ENCODE measurements at regions of chr11 and their contacts with region 1.

Region 1: DNA sequence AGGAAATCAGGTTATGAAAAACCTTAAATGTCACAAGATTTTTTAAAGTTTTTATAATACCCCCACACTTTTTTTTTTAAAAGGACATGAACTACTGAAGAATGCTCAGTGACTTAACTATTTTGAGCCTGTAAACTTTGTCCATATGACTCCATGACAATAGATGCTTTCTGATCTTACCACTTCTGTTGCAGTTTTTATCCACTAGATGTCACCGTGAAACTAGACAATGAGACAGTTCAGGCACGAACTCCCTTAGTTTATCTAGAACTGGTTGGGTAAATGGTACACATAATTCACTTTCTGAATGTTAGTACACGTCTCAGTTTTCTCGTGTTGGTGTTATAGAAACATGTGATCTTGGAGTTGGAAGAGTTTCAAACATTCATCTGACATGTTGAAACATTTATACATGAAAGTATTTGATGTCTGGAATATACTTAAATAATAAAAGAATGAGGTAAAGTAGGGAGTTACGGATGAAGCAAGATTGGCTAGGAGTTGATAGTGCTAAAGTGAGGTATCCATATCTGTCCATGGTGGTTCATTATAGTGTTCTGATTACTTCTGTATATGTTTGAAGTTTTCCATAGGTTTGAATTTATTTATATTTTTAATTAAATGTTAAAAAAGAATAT is 8.1 kb downstream of the CCDC15 start:
- DNase-seq: peak; percentile 41 to 77 (median 54)
- ATAC-seq: peak; percentile 96
- H3K4me3 ChIP-seq: no peak overlapping the region
- H3K27ac ChIP-seq: no peak overlapping the region
- H3K4me1 ChIP-seq: no peaks in the 10 kb centered on the region
- H3K27me3 ChIP-seq: no peaks in the 10 kb centered on the region
- CTCF ChIP-seq: peak; percentile 67 to 89 (median 72)
- EP300 ChIP-seq: no peak
- POLR2A ChIP-seq: no peak
- RAD21 ChIP-seq: peak; percentile 95 to 96

Region 2: DNA sequence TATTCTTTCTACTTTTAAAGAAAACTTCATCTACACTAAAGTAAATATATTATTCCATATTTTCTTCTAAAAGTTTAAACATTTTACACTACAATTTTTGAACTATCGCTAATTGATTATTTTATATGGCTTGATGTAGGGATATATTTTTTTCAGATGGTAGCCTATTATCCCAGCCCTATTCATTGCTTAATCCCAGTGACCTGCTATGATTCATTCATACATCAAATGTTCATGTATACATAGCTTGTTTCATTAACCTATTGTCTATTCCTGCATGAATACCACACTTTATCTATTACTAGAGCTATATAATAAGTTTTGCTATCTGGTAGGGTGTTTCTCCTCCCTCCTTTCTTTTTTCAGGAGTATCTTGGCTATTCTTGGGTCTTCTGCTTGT is 59.5 kb before region 1 on chr11:
- CTCF ChIA-PET with region 1: no interaction called
- POLR2A ChIA-PET with region 1: no interaction called
- in situ Hi-C with region 1: no loop called
- intact Hi-C with region 1: no loop called
- DNase-seq: no peak
- ATAC-seq: no peak
- H3K4me3 ChIP-seq: no peak overlapping the region
- H3K27ac ChIP-seq: no peak overlapping the region
- H3K4me1 ChIP-seq: no peaks in the 10 kb centered on the region
- H3K27me3 ChIP-seq: peaks cover 4 to 12% of the 10 kb centered on the region in 2 experiments; a peak in 3 of 5 replicates
- CTCF ChIP-seq: no peak
- EP300 ChIP-seq: no peak
- POLR2A ChIP-seq: no peak
- RAD21 ChIP-seq: no peak

Region 3: DNA sequence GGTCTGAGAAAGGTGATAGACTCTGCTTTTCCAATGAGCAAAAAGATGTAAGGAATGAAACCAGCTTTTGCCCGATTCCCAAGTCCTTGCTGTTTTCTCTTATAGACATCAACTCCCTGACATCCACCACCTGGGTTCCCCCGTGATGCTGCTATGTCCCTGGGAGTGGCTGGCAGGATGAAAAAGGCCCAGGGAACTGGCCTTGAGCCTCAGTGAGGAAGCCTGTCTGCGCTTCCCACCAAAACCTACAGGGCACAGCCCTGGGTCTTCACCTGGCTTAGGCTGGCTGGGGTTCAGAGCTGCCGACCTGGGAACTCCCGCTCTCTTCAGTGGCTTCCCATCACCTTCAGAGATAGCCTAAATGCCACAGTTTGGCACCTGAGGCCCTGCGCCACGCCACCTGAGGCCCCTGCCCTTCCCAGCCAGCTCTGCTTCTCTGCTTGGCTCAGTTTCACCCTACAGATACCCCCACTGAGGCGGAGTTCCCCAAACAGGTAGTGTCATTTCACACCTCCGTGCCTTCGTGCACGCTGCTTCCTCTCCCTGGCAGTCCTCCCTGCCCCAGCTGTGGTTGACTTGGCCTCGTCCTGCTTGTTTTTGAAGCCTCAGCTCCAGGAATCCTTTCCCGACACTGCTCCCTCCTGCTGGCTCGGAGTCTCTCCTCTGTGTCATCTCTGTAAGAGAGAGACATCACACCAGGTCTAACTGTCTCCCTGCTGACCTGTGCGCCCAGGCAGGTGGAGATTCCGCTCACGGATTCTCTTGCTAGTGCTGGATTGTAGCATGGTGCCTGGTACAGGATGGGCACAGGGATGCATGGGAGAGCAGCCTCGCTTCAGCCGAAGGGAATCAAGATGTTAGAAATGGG is 111.8 kb after region 1 on chr11:
- CTCF ChIA-PET with region 1: interaction called, 3 read pairs
- POLR2A ChIA-PET with region 1: no interaction called
- in situ Hi-C with region 1: no loop called
- intact Hi-C with region 1: loop called (anchors 1 kb)
- DNase-seq: no peak
- ATAC-seq: no peak
- H3K4me3 ChIP-seq: no peak overlapping the region
- H3K27ac ChIP-seq: no peak overlapping the region
- H3K4me1 ChIP-seq: peaks cover 64% of the 10 kb centered on the region in 2 experiments
- H3K27me3 ChIP-seq: no peaks in the 10 kb centered on the region
- CTCF ChIP-seq: no peak
- EP300 ChIP-seq: no peak
- POLR2A ChIP-seq: no peak
- RAD21 ChIP-seq: no peak

Region 4: DNA sequence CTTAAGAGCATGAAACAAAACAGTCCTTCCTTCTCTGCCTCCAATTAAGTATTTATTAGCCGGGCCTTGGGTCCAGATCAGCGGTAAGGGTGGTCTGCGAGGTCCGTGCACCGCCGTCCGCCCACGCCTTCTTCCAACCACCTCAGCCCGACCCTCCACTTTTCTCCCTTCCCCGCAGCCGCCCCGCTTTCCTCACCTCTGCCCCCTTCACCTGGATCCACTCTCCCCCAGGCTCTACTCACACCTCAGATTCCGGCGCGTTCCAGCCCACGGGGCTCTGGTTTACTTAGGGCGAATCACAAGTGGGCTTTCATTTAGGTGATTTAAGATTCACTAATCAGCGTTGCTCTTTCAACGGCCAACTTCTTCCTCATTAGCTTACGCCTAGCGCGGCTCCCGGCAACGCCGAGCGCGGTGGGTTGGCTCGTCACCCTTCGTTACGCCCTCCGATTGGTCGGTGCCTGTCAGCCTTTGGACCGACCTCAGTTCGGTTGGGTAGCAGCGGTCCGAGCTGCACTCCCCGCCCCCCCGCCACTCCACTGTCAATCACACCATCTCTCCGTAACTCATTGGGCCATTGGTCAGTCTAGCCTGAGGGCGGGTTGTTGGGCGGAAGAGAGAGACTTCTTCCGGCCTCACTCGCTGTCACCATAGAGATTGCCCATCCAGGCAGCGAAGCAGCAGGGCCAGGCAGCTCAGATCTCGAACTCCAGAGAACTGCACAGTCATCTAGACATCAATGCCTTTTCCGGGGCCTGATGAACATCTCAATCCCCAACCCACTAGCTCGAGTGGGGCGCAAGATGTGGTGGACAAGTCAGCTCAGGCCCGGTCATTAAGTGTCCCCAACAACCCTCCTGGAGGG is 149.5 kb after region 1 on chr11 and contains the start of gene TMEM218:
- CTCF ChIA-PET with region 1: interaction called, 4 read pairs
- POLR2A ChIA-PET with region 1: no interaction called
- in situ Hi-C with region 1: loop called (anchors 10 kb)
- intact Hi-C with region 1: no loop called
- DNase-seq: peak; percentile 98 to 99 (median 98)
- ATAC-seq: peak; percentile 100
- H3K4me3 ChIP-seq: peak within 1 kb of the TSS; percentile 73
- H3K27ac ChIP-seq: peak within 1 kb of the TSS; percentile 47
- H3K4me1 ChIP-seq: peaks cover 0 to 6% of the 10 kb centered on the region in 2 experiments; a peak in 2 of 5 replicates
- H3K27me3 ChIP-seq: no peaks in the 10 kb centered on the region
- CTCF ChIP-seq: no peak
- EP300 ChIP-seq: no peak
- POLR2A ChIP-seq: peak; percentile 71
- RAD21 ChIP-seq: no peak
- polyA plus RNA-seq, gene TMEM218: 24.8 to 25.1 TPM

Region 5: DNA sequence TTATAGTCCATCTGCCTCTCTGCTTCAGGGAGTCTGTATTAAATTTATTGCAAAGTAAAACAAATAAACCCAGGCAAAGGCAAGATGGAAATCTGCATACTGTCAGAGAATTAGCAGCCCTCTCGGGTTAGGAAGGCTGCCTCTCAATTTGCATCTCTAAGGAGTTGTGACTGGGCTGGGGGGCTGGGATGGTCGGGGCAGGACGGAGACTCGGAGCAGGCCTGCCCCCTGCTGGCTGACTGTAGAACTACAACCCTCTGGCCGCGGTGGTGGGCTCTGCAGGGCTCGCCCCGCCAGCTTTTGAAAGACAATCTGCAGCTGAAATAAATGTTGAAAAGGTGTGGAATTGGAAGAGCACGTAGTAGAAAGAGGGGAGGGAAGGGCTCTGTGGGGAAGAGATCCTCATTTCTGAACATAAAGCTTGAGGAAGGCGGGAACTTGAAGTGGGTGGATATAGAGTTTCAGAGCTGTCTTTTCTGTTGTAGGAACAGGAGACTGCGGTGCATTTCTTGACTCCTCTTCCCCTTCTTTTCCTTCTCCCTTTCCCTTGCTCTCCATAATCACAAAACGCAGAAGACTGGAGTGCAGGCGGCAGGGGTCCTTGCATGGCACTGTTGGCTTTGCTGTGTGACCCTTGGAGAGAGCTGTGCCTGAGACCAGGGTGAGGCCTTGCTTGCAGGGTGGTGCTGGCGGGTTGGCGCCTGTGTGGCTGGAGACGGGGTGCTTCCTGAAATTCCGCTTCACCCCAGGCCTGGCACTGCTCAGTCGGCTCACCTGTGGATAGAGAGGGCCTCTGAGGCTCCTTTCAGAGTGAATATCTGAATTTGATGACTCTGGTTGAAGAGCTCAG is 179.8 kb after region 1 on chr11:
- CTCF ChIA-PET with region 1: interaction called, 16 read pairs
- POLR2A ChIA-PET with region 1: no interaction called
- in situ Hi-C with region 1: no loop called
- intact Hi-C with region 1: loop called (anchors 1 kb)
- DNase-seq: peak; percentile 56 to 87 (median 78)
- ATAC-seq: peak; percentile 97
- H3K4me3 ChIP-seq: no peak overlapping the region
- H3K27ac ChIP-seq: no peak overlapping the region
- H3K4me1 ChIP-seq: peaks cover 0 to 7% of the 10 kb centered on the region in 2 experiments; a peak in 2 of 5 replicates
- H3K27me3 ChIP-seq: peaks cover 43 to 58% of the 10 kb centered on the region in 2 experiments; a peak in 4 of 5 replicates
- CTCF ChIP-seq: peak; percentile 81 to 91 (median 85)
- EP300 ChIP-seq: no peak
- POLR2A ChIP-seq: no peak
- RAD21 ChIP-seq: peak; percentile 81 to 87

Region 6: GRCh38 chr11:125295931-125296330 is 333.8 kb after region 1 on chr11:
- CTCF ChIA-PET with region 1: no interaction called
- POLR2A ChIA-PET with region 1: no interaction called
- in situ Hi-C with region 1: no loop called
- intact Hi-C with region 1: no loop called
- DNase-seq: no peak
- ATAC-seq: no peak
- H3K4me3 ChIP-seq: no peak overlapping the region
- H3K27ac ChIP-seq: no peak overlapping the region
- H3K4me1 ChIP-seq: no peaks in the 10 kb centered on the region; a peak in 1 of 5 replicates
- H3K27me3 ChIP-seq: peaks cover 42 to 73% of the 10 kb centered on the region in 2 experiments
- CTCF ChIP-seq: no peak
- EP300 ChIP-seq: no peak
- POLR2A ChIP-seq: no peak
- RAD21 ChIP-seq: no peak

Region 7: DNA sequence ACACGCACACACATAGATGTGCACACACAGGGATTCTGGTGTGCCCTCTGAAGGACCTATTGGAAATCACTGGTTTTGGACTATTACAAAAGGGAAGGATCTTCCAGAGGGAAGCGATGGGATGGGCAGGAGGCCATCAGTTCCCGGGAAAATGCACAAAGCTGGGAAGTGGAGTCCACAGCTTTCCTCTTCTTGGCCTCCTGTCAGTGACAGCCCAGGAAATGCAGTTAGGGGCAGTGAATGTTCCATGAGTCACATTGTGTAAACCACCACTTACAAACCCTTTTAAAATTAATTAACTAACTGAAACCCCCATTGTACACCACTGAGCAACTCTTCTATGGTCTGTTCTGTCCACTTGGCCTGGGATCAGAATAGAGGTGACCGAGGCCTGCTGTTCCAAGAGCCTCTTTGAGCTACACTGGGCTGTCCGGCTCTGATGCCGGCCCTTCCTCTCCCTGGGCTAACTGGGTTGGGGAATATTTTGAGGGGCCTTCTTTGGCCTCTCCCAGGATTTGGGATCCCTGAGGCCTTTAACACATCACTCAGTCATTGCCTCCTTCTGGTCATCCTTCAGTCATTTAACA is 396.3 kb after region 1 on chr11:
- CTCF ChIA-PET with region 1: no interaction called
- POLR2A ChIA-PET with region 1: no interaction called
- in situ Hi-C with region 1: no loop called
- intact Hi-C with region 1: loop called (anchors 1 kb)
- DNase-seq: no peak
- ATAC-seq: no peak
- H3K4me3 ChIP-seq: no peak overlapping the region
- H3K27ac ChIP-seq: no peak overlapping the region
- H3K4me1 ChIP-seq: no peaks in the 10 kb centered on the region
- H3K27me3 ChIP-seq: peaks cover 13 to 52% of the 10 kb centered on the region in 2 experiments; a peak in 4 of 5 replicates
- CTCF ChIP-seq: no peak
- EP300 ChIP-seq: no peak
- POLR2A ChIP-seq: no peak
- RAD21 ChIP-seq: no peak